ENCODE measurements at regions of chr6 and their contacts with region 1.

Region 1: GRCh38 chr6:41072676-41073623 is at the start of gene NFYA:
- DNase-seq: peak; percentile 98 to 100
- H3K4me3 ChIP-seq: peak within 1 kb of the TSS; percentile 80 to 86
- H3K27ac ChIP-seq: peak within 1 kb of the TSS; percentile 98 to 100
- H3K4me1 ChIP-seq: peaks cover 10 to 27% of the 10 kb centered on the region in 2 donors
- H3K27me3 ChIP-seq: no peaks in the 10 kb centered on the region
- CTCF ChIP-seq: peak; percentile 19 to 62 (median 25)
- total RNA-seq, gene NFYA: 10.4 TPM

Region 2: DNA sequence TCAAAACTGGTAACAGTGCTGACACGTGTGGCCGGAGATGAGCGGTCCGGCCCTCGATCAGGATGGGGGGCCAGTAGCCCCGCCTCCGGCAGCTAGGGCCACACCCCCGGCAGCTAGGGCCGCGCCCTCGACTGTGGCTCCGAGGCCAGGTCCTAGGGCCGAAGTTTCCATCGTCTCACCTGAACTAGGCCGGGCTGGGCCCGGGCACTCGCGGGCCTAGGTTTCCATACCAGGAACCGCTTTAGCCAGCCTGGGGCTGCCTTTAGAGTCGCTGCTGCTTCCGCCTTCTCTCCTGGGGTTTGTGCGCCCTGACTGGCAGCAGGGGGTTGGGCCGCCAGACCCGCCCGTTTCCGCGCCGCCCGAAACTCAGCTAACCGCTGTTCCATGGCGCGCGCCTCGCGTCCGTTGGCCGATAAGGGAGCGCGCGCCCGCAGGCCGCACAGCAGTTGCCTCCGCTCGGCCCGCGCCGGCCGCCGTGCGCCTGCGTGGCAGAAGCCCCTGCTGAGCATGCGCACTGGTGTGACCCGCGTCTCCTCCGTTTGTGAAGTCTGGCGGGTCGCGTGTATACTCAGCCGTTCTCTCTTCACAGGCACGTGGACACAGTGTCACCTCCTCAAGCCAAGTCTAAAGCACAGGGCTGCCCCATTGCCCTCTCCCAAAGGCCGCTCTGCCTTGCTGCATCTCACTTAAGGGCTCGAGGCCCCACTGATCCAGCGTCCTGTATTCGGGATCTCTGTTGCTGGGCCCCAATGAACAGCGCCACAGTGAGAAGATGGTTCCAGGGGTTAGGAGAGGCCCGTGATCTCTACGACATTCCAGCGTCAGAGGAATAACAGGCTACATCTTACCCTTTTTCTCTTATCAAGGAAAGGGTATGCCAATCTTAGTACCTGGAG is 1958.0 kb before region 1 on chr6 and contains the start of gene SAYSD1:
- intact Hi-C with region 1: loop called (anchors 10 kb)
- DNase-seq: peak; percentile 55 to 95
- H3K4me3 ChIP-seq: peak within 1 kb of the TSS; percentile 68 to 75
- H3K27ac ChIP-seq: peak within 1 kb of the TSS; percentile 89 to 91
- H3K4me1 ChIP-seq: peaks cover 0 to 9% of the 10 kb centered on the region in 2 donors
- H3K27me3 ChIP-seq: no peaks in the 10 kb centered on the region
- CTCF ChIP-seq: no peak
- total RNA-seq, gene SAYSD1: 2.1 TPM

Region 3: GRCh38 chr6:39347906-39348585 is 1724.9 kb before region 1 on chr6:
- intact Hi-C with region 1: loop called (anchors 10 kb)
- DNase-seq: peak in 1 of 2 donors; percentile 84
- H3K4me3 ChIP-seq: no peak overlapping the region
- H3K27ac ChIP-seq: no peak overlapping the region
- H3K4me1 ChIP-seq: peaks cover 4 to 21% of the 10 kb centered on the region in 2 donors
- H3K27me3 ChIP-seq: no peaks in the 10 kb centered on the region
- CTCF ChIP-seq: peak; percentile 62 to 95 (median 89)

Region 4: GRCh38 chr6:40894962-40895799 is 177.8 kb before region 1 on chr6:
- intact Hi-C with region 1: loop called (anchors 5 kb)
- DNase-seq: no peak
- H3K4me3 ChIP-seq: no peak overlapping the region
- H3K27ac ChIP-seq: no peak overlapping the region
- H3K4me1 ChIP-seq: peaks cover 0 to 23% of the 10 kb centered on the region in 2 donors
- H3K27me3 ChIP-seq: no peaks in the 10 kb centered on the region
- CTCF ChIP-seq: peak; percentile 31 to 56 (median 40)

Region 5: GRCh38 chr6:41200296-41200900 is 127.4 kb after region 1 on chr6:
- intact Hi-C with region 1: no loop called
- DNase-seq: peak in 1 of 2 donors; percentile 32
- H3K4me3 ChIP-seq: no peak overlapping the region
- H3K27ac ChIP-seq: no peak overlapping the region
- H3K4me1 ChIP-seq: no peaks in the 10 kb centered on the region
- H3K27me3 ChIP-seq: no peaks in the 10 kb centered on the region
- CTCF ChIP-seq: no peak

Region 6: GRCh38 chr6:41735427-41736356 is 662.7 kb after region 1 on chr6 and contains the start of gene TFEB:
- intact Hi-C with region 1: loop called (anchors 10 kb)
- DNase-seq: peak; percentile 77 to 97
- H3K4me3 ChIP-seq: peak within 1 kb of the TSS; percentile 92 to 93
- H3K27ac ChIP-seq: peak within 1 kb of the TSS; percentile 90 to 99
- H3K4me1 ChIP-seq: peaks cover 0 to 26% of the 10 kb centered on the region in 2 donors
- H3K27me3 ChIP-seq: no peaks in the 10 kb centered on the region
- CTCF ChIP-seq: peak; percentile 86 to 99 (median 86)
- total RNA-seq, gene TFEB: 18.6 TPM

Region 7: DNA sequence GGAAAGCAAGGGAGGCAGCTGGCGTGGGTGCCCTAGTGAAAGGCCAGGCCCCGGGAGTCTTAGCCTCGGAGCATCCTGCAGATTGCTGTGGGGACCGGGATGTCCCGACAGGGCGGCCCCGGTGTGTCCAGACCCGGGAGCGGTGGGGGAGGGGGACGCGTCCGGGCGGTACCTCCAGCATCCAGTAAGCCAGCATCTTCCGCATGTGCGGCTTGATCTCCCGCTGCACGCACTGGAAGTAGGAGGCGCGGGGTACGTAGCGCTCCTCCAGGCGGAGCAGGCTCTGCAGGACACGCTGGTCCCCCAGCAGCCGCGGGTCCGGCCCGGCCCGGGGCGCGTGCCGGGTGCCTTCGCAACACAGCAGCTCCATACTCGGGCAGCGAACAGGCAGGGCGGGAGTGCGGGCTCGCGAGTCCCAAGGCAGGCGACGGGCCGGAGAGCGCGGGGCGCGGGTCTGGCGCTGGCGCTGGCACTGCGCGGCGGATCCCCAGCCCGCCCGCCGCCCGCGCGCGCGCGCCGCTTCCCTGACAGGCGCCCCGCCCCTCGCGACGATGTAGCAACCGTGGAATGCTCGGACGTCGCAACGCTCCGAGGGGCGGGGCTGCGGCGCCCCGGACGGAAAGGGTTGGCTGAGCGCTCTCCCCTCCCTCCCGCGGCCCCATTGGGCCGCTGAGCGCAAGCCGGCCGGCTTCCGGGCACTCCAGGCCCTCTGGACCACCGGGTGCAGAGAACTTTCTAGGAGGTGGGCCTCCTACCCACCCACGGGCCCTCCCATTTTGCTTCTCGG is 868.5 kb after region 1 on chr6 and contains the start of gene CCND3:
- intact Hi-C with region 1: loop called (anchors 2 kb)
- DNase-seq: peak; percentile 57 to 95
- H3K4me3 ChIP-seq: peak within 1 kb of the TSS; percentile 84 to 93
- H3K27ac ChIP-seq: peak within 1 kb of the TSS; percentile 72 to 83
- H3K4me1 ChIP-seq: peaks cover 4 to 20% of the 10 kb centered on the region in 2 donors
- H3K27me3 ChIP-seq: no peaks in the 10 kb centered on the region
- CTCF ChIP-seq: peak in 1 of 3 experiments; percentile 1
- total RNA-seq, gene CCND3: 130 TPM

Measured in ascending aorta (tissue), 2 donors.